ENCODE measurements at regions of chr1 and their contacts with region 1.

Region 1: GRCh38 chr1:8026153-8026975 is at the start of gene ERRFI1:
- DNase-seq: peak; percentile 89 to 95
- ATAC-seq: peak; percentile 81 to 84
- H3K4me3 ChIP-seq: peak within 1 kb of the TSS; percentile 77 to 96 (median 83)
- H3K27ac ChIP-seq: peak within 1 kb of the TSS; percentile 87 to 98 (median 94)
- H3K4me1 ChIP-seq: peaks cover 41 to 49% of the 10 kb centered on the region in 2 donors
- H3K27me3 ChIP-seq: no peaks in the 10 kb centered on the region
- CTCF ChIP-seq: peak in 3 of 5 experiments; percentile 5 to 17 (median 9)
- POLR2A ChIP-seq: peak; percentile 99 to 100
- total RNA-seq, gene ERRFI1: 184 to 644 (median 448) TPM

Region 2: DNA sequence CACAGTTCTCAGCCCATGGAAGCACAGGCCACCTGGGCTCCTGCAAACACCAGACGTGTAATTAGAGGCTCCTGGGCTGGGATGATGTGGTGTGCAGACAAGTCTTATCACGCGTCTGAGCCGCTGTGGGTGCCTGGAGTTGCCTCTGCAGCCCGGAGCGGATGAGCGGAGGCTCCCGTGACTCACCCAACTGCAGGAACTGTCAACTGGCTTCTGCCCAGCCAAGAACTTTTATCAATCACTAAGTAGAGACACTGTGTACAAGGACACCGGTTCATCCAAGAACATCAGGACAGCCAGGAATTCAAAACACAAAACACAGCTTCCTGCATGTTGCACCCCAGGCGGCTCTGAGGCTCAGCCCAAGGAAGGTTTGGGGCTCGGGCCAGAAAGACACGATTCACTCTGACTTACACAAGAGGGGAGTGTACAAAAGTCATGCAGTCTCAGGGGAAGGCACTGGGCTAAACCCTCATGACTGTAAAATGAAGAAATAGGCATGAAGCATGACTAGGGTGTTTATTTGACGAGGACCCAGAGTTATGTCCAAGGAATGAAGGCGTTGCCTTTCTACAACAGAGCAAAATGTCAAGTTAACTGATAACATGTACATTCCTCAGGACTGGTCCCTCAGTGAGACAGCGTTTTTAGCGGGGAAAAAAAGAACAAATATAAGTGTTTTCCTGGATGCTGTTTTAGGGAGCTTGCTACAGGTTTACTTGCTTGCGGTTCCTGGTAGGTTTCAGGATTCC is 21.4 kb before region 1 on chr1:
- in situ Hi-C with region 1: no loop called
- intact Hi-C with region 1: loop called (anchors 2 kb)
- DNase-seq: peak; percentile 98
- ATAC-seq: peak; percentile 85 to 92
- H3K4me3 ChIP-seq: peak overlapping the region in 2 of 4 donors; percentile 15 to 26
- H3K27ac ChIP-seq: peak overlapping the region; percentile 87 to 92 (median 88)
- H3K4me1 ChIP-seq: peaks cover 29 to 44% of the 10 kb centered on the region in 2 donors
- H3K27me3 ChIP-seq: no peaks in the 10 kb centered on the region
- CTCF ChIP-seq: peak in 1 of 5 experiments; percentile 29
- POLR2A ChIP-seq: peak in 1 of 2 donors; percentile 55

Region 3: GRCh38 chr1:8217011-8217711 is 190.8 kb after region 1 on chr1:
- in situ Hi-C with region 1: no loop called
- intact Hi-C with region 1: loop called (anchors 5 kb)
- DNase-seq: no peak
- ATAC-seq: peak; percentile 32 to 43
- H3K4me3 ChIP-seq: peak overlapping the region; percentile 48 to 58 (median 54)
- H3K27ac ChIP-seq: peak overlapping the region; percentile 42 to 64 (median 58)
- H3K4me1 ChIP-seq: peaks cover 4 to 15% of the 10 kb centered on the region in 2 donors
- H3K27me3 ChIP-seq: no peaks in the 10 kb centered on the region
- CTCF ChIP-seq: peak in 1 of 5 experiments; percentile 24
- POLR2A ChIP-seq: peak in 1 of 2 donors; percentile 17

Region 4: DNA sequence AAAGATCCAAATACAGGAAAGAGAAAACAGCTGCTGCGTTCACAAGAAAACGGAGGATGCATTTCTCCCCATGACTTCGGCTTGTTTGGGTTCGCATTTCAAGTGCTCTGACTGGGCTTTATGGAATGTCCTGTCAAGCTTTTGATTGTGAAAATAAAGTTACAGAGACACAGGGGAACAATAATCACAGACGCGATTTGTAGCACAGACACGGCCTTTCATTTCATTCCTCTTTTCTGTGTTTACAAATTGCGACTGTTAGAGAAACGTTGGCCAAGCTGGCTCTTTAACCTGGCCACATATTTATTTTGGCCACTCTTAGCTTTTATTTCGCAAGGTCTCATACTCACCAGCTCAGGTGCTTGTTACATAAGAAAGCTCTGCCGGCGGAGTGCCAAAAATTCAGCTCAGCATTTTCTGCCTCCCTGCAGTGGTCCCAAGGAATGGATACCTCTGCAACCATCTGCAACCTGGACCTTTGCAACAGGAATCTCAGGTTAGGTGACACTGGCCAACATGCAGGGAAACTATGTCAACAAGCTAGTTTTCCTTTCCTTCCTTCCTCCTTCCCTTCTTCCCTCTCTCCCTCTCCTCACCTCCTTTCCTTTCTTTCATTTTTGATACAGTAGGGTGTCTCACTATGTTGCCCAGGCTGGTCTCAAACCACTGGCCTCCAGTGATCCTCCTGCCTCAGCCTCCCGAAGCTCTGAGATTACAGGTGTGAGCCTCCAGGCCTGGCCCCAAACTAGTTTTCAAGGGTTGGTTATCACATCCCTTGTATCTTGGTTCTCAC is 233.3 kb after region 1 on chr1:
- in situ Hi-C with region 1: no loop called
- intact Hi-C with region 1: loop called (anchors 2 kb)
- DNase-seq: peak; percentile 74 to 78
- ATAC-seq: peak in 1 of 2 donors; percentile 87
- H3K4me3 ChIP-seq: peak overlapping the region in 1 of 4 donors; percentile 45
- H3K27ac ChIP-seq: peak overlapping the region; percentile 75 to 87 (median 84)
- H3K4me1 ChIP-seq: peaks cover 13 to 19% of the 10 kb centered on the region in 2 donors
- H3K27me3 ChIP-seq: no peaks in the 10 kb centered on the region
- CTCF ChIP-seq: no peak
- POLR2A ChIP-seq: no peak

Measured in gastrocnemius medialis (tissue), 4 donors.